Left colon (tissue), 2 donors: ENCODE measurements at regions of chr3 and their contacts with region 1.

Region 1: DNA sequence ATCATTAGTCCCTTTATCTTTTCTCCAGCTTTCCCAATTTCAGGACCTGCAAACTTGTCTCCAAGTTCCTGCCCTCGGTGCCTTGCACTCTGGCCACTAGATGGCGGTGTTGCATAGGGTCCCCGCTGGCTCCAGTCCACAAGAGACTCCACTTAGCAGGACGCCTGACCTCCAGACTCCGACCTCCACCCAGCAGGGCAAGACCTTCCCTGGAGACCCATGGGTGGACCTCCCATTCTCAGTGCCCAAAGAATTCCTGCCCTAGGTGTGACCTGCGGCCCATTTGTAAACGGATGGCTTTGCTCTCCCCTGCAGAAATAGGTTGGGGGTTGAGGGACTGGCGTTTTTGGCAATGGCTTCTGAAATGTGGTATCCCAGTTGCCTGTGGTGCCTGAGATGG is 82.6 kb downstream of the LSM3 start:
- DNase-seq: peak; percentile 74 to 87
- ATAC-seq: peak; percentile 70

Region 2: DNA sequence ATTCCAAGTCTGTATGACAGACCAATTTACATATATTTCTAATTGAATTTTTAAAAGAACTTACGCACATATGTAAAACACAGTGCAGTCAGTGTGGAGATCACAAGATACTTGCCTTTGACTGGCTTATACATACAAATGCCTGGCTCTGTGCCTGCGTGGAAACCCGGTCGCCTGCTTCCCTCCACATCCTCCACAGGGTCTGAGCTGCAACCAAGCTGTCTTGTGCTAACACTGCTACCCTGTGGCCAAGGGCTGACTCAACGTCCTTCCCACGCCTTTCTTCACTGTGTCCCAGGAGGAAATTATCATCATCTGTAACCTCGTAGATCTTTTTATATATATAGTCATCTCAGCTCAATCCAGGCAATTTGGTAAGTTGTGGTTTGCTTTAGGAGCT is 498.3 kb before region 1 on chr3:
- intact Hi-C with region 1: no loop called
- DNase-seq: no peak
- ATAC-seq: no peak

Region 3: DNA sequence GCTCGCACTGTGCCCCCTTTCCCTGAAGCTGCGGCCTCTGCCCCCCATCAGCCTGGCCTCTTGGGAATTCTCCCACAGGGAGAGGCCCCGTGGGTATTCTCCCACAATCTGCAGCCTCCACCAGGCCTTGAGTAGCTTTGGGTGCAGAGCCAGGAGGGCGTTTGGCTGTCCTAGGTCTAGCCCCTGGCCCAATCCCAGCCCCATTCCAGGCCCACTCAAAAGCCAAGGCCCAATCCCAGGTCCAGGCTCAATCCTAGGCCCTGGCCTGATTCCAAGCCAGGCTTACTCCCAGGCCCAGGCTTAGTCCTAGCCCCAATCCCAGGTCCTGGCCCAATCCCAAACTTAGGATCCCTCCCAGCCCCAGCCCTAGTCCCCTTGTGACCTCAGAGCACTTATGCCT is 196.3 kb before region 1 on chr3:
- intact Hi-C with region 1: no loop called
- DNase-seq: no peak
- ATAC-seq: no peak

Region 4: DNA sequence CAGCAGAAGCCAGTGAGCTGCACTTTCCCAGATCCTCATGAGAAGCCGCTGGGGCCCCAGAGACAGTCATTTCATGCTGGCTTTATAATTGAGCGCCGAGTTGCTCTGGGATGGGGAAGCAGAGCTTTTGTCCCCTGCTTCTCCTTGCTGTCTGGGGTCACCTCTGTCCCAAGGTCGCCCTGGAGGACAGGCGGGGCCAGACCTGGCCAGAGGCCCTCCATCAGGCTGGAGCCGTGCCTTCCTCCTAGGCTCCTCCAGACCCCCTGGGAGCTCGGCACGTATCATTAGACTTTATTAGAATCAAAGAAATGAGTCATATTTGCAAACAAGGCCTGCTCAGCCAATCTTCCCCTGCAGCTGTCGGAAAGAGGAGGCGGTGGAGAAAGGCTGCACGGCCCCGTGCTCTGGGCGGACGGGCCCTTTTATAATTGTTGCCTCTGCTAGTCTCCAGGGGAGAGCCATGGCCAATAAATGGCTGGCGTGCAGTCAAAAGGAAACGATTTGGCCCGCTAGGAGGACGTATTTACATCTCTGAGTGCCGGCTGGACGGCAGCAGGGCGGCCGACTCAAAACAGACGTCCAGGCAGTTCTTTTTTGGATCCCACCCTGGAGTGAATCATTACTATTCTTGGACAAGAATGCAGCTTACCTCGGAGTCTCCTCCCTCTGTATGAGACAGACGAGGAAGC is 191.6 kb after region 1 on chr3:
- intact Hi-C with region 1: loop called in 1 of 2 experiments (anchors 5 kb)
- DNase-seq: peak; percentile 82 to 92
- ATAC-seq: peak; percentile 89

Region 5: DNA sequence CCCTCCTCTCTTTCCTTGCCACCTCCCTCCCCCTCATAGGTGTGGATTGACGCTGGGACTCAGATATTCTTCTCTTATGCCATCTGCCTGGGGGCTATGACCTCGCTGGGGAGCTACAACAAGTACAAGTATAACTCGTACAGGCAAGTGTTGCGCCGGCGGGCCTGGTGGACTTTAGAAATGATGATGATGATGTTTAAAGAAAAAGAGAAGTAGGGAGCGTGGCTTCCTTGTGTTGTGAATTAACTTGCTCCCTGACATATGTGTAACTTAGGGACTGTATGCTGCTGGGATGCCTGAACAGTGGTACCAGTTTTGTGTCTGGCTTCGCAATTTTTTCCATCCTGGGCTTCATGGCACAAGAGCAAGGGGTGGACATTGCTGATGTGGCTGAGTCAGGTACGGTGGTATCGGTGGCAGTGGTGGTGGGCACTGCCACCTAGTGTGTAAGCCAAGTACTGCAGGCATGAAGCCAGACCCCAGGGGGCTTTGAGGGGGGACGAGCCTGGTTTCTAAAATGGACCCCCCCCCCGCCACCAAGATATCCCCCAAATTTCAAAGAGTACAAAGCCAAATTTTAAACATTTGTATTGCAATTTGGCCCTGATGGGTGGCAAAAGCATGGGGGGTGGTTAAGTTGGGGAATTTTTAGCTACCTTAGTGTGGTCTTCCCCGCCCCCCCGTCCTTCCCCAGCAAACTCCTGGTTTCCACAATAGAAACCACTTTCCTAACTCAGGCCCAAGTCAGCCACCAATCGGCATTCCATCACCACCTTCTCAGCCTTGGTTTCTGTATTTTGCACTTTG is 206.8 kb after region 1 on chr3:
- intact Hi-C with region 1: loop called (anchors 2 to 5 kb)
- DNase-seq: no peak
- ATAC-seq: peak; percentile 69